Activated B cell treated with CpG ODN at 0.5 μM for 24 hours (primary cell): ENCODE measurements at regions of chr4 and their contacts with region 1.

Region 1: DNA sequence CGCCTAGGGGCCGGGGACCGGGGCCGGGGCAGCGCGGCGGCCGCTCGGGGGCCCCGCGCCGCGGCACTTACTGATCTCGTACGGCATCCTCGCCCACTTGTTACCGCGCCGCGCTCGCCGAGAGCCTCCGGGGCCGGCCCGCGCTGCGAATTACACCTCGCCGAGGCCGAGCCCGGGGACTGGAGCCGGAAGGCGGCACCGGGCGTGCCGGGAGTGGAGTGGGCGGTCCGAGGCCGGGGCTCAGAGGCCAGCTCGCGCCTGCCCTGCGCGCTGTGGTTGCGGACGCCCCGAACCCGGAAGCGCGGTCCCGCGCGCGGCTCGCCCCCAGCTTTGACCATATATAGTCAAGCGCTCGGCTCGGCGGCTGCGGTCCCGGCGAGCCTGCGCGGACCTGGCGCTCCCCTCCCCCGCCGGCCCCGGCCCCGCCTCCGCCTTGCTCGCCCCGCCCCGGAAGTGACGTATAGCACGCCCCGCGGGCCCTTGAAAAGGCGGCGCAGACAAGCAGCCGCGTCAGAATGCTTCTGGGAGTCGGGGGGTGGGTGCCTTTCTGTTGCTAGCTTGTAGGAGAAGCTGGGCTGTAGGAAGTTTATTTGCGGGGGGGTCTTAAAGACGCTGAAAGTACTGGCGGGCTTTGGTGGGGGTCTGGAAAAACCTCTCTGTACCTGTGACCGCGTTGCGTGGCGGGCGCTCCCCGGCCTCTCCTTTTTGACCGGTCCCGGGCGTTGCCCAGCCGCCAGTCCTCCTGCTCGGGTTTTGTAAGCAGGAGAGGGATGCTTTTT is at the start of gene WDR1:
- DNase-seq: peak; percentile 90
- ATAC-seq: peak; percentile 86
- H3K4me3 Mint-ChIP-seq: peak within 1 kb of the TSS; percentile 91
- H3K27ac Mint-ChIP-seq: peak within 1 kb of the TSS; percentile 98
- H3K4me1 Mint-ChIP-seq: peaks cover 62% of the 10 kb centered on the region
- H3K27me3 Mint-ChIP-seq: no peaks in the 10 kb centered on the region
- CTCF ChIP-seq: no peak
- total RNA-seq, gene WDR1: 337 and 348 TPM in 2 replicates

Region 2: DNA sequence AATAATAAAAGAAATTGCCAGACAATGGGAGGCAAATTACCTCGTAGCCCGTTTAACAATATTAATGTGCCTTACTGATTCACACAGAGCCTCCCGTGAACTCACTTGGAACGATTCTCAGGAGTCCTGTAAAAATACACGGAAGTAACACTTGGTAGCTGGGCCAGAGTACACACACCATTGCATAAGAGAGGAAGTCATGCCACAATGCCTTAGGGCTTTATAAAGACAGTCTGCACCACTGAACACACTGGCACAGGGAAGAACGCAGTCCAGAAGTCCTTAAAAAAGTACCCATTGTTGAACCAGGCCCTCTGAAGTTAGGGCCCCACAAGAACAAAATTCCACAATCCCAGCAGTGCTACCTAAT is 110.6 kb before region 1 on chr4:
- CTCF ChIA-PET with region 1: no interaction called
- POLR2A ChIA-PET with region 1: interaction called, 10 read pairs
- intact Hi-C with region 1: no loop called
- DNase-seq: no peak
- ATAC-seq: peak; percentile 77
- H3K4me3 Mint-ChIP-seq: peak overlapping the region; percentile 9
- H3K27ac Mint-ChIP-seq: peak overlapping the region; percentile 57
- H3K4me1 Mint-ChIP-seq: peaks cover 24% of the 10 kb centered on the region
- H3K27me3 Mint-ChIP-seq: no peaks in the 10 kb centered on the region
- CTCF ChIP-seq: no peak

Region 3: DNA sequence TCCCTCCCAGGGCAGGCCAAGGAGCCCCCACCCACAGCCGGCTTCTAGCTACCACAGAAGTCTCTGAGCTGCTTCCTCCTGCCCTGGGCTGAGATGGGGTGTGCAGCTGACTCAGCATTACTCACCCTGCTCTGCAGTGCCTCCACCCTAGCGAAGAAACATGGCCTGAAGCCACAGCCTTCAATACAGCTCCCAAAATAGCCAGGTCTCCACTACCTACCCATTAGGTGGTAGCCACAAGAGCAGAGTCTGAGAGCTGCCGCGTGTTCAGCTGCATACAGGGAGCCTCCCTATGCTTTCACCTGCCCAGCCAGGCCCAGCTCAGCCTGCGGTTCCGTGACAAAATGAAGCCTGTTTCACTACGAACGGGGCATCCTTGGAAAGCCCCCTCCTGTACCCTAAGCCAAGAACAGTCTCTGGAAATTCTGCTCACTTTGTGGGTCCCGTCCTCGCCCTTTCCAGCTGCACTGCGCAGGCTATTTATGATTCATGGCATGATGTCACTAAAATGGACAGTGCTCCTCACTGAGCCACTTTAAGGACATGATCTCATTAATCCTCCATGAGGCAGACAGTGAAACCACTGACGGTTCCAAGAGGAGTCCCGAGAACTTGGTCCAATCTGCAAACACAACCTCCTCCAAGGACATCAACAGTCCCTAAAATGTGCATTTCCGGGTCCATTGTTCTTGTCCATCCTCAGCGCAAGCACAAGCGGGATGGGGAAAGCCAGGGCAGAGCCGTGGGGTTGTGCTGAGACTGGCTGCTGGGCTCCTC is 20.4 kb before region 1 on chr4:
- CTCF ChIA-PET with region 1: interaction called, 3 read pairs
- POLR2A ChIA-PET with region 1: interaction called, 18 read pairs
- intact Hi-C with region 1: loop called (anchors 1 kb)
- DNase-seq: no peak
- ATAC-seq: peak; percentile 74
- H3K4me3 Mint-ChIP-seq: no peak overlapping the region
- H3K27ac Mint-ChIP-seq: no peak overlapping the region
- H3K4me1 Mint-ChIP-seq: peaks cover 48% of the 10 kb centered on the region
- H3K27me3 Mint-ChIP-seq: no peaks in the 10 kb centered on the region
- CTCF ChIP-seq: no peak

Region 4: GRCh38 chr4:10151182-10151581 is 34.4 kb after region 1 on chr4:
- CTCF ChIA-PET with region 1: interaction called, 3 read pairs
- POLR2A ChIA-PET with region 1: interaction called, 48 read pairs
- intact Hi-C with region 1: loop called (anchors 1 kb)
- DNase-seq: no peak
- ATAC-seq: peak; percentile 97
- H3K4me3 Mint-ChIP-seq: peak overlapping the region; percentile 36
- H3K27ac Mint-ChIP-seq: no peak overlapping the region
- H3K4me1 Mint-ChIP-seq: peaks cover 29% of the 10 kb centered on the region
- H3K27me3 Mint-ChIP-seq: peaks cover 27% of the 10 kb centered on the region
- CTCF ChIP-seq: no peak

Region 5: GRCh38 chr4:10226756-10227155 is 110.0 kb after region 1 on chr4:
- CTCF ChIA-PET with region 1: no interaction called
- POLR2A ChIA-PET with region 1: no interaction called
- intact Hi-C with region 1: no loop called
- DNase-seq: no peak
- ATAC-seq: no peak
- H3K4me3 Mint-ChIP-seq: no peak overlapping the region
- H3K27ac Mint-ChIP-seq: no peak overlapping the region
- H3K4me1 Mint-ChIP-seq: no peaks in the 10 kb centered on the region
- H3K27me3 Mint-ChIP-seq: no peaks in the 10 kb centered on the region
- CTCF ChIP-seq: no peak